ENCODE measurements at regions of chr19 and their contacts with region 1.

Region 1: DNA sequence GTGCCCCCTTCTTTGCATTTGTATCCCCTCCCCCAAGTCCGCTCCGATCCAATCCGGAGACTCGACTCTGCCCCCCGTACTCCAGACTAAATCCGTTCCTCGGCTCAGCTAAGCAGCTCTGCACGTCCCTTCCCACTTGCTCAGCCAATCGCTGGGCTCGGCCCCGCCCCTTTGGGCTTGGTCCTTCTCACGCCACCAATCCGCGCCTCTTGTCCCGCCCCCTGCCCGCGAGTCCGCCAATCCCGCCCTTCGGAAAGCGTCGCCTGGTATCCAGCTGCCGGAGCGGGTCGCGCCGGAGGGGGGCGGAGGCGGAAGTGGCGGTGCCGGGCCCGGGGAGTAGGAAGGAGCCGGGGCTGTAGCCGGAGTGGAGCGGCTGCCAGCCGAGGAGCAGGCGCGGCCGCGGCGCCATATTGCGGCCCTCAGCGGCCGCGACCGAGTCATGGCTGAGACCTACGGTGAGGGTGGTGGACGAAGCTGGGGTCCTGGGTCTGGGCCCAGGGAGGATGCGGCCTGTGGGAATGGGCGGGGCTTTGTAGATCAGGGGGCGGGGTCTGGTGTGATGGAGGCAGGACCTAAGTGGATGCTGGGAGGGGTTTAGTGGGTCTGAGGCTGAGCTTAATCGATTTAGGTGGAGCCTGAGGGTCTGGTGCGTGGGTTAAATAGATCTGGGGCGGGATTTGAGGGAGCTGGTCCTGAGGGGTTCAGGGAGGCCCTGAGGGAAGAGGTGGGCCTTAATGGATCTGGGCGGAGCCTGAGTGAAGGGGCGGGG is at the start of gene RAB4B:
- DNase-seq: peak; percentile 99 to 100 (median 100)
- H3K4me3 ChIP-seq: peak within 1 kb of the TSS; percentile 57 to 98 (median 80)
- H3K27ac ChIP-seq: peak within 1 kb of the TSS; percentile 63 to 100 (median 97)
- H3K27me3 ChIP-seq: no peaks in the 10 kb centered on the region
- CTCF ChIP-seq: peak in 18 of 56 donors; percentile 4 to 44 (median 25)
- total RNA-seq, gene RAB4B: 42.2 to 113 (median 77.4) TPM

Region 2: DNA sequence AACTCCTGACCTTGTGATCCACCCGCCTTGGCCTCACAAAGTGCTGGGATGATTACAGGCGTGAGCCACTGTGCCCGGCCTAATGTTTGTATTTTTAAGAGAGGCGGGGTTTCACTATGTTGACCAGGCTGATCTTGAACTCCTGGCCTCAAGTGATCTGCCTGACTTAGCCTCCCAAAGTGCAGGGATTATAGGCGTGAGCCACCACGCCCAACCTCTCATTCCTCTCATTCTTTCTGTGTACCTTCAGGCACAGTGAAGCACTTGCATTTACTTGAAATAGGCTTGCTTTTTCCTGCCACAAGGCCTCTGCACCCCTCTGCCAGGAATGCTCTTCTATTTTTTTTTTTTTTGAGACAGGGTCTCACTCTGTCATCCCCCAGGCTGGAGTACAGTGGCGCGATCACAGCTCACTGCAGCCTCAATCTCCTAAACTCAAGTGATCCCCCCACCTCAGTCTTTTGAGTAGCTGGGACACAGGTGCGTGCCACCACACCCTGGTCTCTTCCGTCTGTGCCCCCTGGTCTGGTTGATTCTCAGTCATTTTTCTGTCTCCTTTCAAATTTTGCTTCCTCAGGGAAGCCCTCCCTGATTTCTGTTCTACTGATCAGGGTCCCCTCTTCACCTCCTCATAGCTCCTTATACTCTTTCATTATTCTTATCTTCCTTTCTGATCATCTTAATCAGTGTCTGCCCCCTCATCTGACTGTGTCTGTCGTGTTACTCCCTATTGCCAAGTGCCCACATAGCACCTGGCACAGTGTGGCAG is 42.9 kb before region 1 on chr19:
- intact Hi-C with region 1: no loop called
- DNase-seq: no peak
- H3K4me3 ChIP-seq: no peak overlapping the region
- H3K27ac ChIP-seq: no peak overlapping the region
- H3K27me3 ChIP-seq: no peaks in the 10 kb centered on the region
- CTCF ChIP-seq: no peak

Region 3: GRCh38 chr19:40750059-40750873 is 27.9 kb before region 1 on chr19 and contains the start of gene ACTMAP:
- intact Hi-C with region 1: loop called in 1 of 2 experiments (anchors 1 kb)
- DNase-seq: peak; percentile 99 to 100 (median 100)
- H3K4me3 ChIP-seq: peak within 1 kb of the TSS; percentile 60 to 99 (median 81)
- H3K27ac ChIP-seq: peak within 1 kb of the TSS; percentile 76 to 98 (median 94)
- H3K27me3 ChIP-seq: no peaks in the 10 kb centered on the region
- CTCF ChIP-seq: peak in 5 of 56 donors; percentile 4 to 23 (median 14)
- total RNA-seq, gene ACTMAP: 1.4 to 15.4 (median 5.6) TPM